ENCODE measurements at regions of chr9 and their contacts with region 1.

Region 1: GRCh38 chr9:136849038-136849959 is at the start of gene PHPT1:
- DNase-seq: peak; percentile 97
- H3K4me3 Mint-ChIP-seq: peak within 1 kb of the TSS; percentile 93
- H3K27ac Mint-ChIP-seq: peak within 1 kb of the TSS; percentile 85
- H3K4me1 Mint-ChIP-seq: peaks cover 21% of the 10 kb centered on the region
- H3K27me3 Mint-ChIP-seq: peaks cover 18% of the 10 kb centered on the region
- total RNA-seq, gene PHPT1: 82.3 to 85.4 TPM

Region 2: GRCh38 chr9:136807281-136808074 is 41.8 kb before region 1 on chr9 and contains the start of gene RABL6:
- CTCF ChIA-PET with region 1: interaction called, 34 read pairs
- POLR2A ChIA-PET with region 1: interaction called, 3 read pairs
- DNase-seq: peak; percentile 84
- H3K4me3 Mint-ChIP-seq: peak within 1 kb of the TSS; percentile 87
- H3K27ac Mint-ChIP-seq: peak within 1 kb of the TSS; percentile 76
- H3K4me1 Mint-ChIP-seq: peaks cover 37% of the 10 kb centered on the region
- H3K27me3 Mint-ChIP-seq: peaks cover under 1% of the 10 kb centered on the region
- total RNA-seq, gene RABL6: 96.0 to 96.2 TPM

Region 3: GRCh38 chr9:137046098-137046787 is 196.9 kb after region 1 on chr9 and contains the start of gene NPDC1:
- CTCF ChIA-PET with region 1: no interaction called
- POLR2A ChIA-PET with region 1: no interaction called
- DNase-seq: peak; percentile 86
- H3K4me3 Mint-ChIP-seq: peak within 1 kb of the TSS; percentile 76
- H3K27ac Mint-ChIP-seq: peak within 1 kb of the TSS; percentile 65
- H3K4me1 Mint-ChIP-seq: peaks cover 29% of the 10 kb centered on the region
- H3K27me3 Mint-ChIP-seq: peaks cover 33% of the 10 kb centered on the region
- total RNA-seq, gene NPDC1: 82.8 to 89.2 TPM